ENCODE measurements at regions of chr6 and their contacts with region 1.

Region 1: GRCh38 chr6:109382576-109383437 is 540 bp upstream of the CD164 start:
- DNase-seq: peak; percentile 97

Region 2: DNA sequence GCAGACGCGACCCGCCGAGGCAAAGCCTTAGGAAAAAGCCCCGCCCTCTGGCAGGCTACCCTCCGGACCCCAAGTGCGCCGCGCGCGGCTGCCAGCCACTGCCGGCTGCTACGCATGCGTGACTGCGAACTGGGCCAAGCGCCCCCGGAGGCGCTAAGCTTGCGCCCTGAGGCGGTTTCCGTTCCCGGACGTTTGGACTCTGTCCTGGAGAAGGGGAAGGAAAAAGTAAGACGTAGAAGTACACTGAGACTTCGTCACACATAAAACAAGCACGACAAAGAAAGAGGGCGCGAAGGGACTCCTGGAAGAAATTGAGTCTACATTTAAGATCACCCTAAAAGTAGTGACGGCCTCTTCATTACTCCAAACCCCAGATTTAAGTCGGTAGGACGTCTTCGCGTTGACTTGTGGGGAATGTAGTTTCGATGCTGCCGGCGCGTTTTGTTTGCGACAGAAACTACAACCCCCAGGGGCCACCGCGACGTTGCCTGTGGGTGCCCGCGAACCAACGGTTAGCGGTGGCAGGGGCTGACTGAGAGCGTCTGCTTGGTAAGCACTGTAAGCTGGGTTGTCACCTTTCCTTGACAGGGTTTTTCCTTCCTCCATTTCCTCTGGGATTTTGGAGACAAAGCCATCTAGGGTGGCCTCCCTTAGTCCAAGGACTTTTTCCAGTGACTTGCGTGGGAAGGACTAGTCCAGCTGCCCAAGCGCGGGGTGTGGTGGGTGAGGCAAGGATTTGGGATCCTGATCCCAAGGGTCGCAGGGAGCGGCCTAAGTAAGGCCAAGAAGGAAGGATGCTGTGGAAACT is 287.6 kb before region 1 on chr6 and contains the start of gene CEP57L1:
- intact Hi-C with region 1: loop called (anchors 1 kb)
- DNase-seq: peak; percentile 97
- total RNA-seq, gene CEP57L1: 7.9 TPM

Region 3: DNA sequence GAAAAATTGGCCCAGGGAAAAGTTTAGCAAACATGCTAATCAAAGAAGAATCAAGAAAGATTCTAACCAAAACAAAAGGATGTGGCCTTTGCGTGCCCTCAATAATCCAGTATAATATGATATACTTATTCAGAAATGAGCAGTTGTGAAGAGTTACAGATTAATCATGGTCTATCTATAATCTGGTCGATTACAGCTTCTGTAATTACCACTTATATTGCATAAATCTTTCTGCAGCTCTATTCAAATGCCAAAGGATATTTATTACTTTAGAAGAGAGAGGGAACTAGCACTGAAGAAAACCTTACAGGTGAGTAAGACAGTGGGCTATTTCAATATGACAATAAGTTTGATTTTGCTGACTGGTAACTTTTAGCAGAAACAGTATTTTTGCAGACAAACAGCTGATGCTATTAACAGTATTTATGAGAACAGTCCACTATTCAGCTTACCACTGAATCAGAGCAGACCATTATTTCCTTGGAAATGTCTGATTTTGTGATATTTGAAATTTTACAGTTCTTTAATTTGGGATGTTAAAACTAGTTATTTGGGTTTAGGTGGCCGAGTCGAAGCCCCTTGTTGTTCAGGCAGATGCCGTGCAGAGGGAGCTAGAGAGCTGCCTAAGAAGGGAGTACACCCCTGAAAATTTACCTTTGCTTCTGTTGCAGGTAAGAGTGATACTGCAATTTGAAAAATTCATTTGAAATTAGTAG is 195.2 kb before region 1 on chr6:
- intact Hi-C with region 1: loop called (anchors 2 kb)
- DNase-seq: no peak

Region 4: DNA sequence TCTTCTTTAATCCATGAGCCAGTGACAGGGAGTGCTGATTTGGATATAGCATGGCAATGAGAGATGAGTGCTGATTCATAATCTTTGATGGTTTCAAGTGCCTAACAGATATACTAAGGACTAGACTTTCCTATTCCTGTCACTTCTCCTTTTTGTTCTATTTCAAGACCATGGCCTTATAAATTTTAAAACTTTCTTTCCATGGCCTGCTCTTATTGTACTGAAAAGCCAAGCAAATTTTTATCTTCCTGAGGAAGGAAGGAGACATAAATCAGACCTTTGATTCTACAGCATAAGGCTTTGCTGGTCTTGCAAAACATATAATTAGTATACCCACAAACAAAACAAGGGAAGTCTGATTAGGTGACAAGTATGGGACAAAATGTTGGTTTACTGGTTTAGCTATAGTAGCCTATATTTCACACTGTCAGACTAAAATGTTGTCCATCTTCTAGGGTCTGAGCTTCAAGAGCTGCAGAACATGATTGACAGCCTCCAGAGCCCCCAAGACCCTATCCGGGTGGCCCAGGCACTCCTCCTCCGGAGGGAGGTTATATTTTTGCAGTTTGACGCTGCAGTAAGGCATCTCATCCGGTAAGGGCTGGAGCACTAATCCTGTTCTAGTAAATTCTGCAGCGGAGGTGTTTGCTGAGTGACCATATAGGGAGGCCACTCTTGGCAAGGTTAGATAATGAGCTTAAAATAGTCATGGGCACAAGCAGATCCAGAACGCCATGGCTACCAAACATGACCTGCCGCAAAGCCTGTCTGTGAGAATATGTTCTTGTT is 82.8 kb before region 1 on chr6:
- intact Hi-C with region 1: loop called (anchors 5 kb)
- DNase-seq: no peak

Region 5: DNA sequence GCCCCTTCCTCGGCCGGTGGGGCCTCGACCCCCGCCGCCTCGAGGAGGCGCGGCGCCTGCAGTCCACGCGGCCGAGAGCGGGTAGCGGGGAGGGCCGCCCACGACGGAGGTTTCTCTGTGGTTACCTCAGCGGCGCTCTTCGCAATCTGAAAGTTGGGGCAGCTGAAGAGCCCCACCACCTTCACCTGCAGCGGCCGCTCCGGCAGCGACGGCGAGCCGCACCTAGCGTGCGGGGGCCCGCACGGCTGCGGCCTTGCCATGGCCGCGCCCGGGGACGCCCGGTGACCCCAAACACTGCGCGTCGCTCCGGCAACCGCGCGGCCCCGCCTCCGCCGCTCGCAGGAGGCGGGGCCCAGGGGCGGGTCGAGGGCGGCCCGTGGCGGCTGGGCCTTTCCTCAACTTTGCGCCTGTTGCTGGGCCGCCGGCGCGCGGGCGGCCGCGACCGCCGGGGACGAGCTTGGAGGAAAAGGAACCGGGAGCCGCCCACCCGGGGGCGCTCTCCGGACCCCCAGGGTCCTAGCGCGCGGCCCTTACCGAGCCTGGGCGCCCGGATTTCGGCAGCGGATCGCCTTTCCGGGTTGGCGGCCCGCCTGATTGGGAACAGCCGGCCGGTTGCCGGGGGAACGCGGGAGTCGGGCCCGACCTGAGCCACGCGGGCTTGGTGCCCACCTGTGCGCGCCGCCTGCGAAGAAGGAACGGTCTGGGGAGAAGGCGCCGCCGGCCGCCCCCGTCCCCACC is 57.7 kb after region 1 on chr6 and contains the starts of genes PPIL6 and SMPD2:
- intact Hi-C with region 1: loop called (anchors 2 kb)
- DNase-seq: peak; percentile 95
- total RNA-seq, gene PPIL6: 1.2 TPM
- total RNA-seq, gene SMPD2: 5.1 TPM

Region 6: GRCh38 chr6:109455502-109456282 is 72.9 kb after region 1 on chr6 and contains the start of gene MICAL1:
- intact Hi-C with region 1: loop called (anchors 5 kb)
- DNase-seq: peak; percentile 91
- total RNA-seq, gene MICAL1: 7.7 TPM

Measured in cardiac septum (tissue), 1 donor.